Posterior vena cava (tissue), 2 donors: ENCODE measurements at regions of chr1 and their contacts with region 1.

Region 1: GRCh38 chr1:66478116-66478515 is 55.8 kb upstream of the SGIP1 start:
- DNase-seq: no peak

Region 2: GRCh38 chr1:65495137-65495536 is 983.0 kb before region 1 on chr1:
- intact Hi-C with region 1: loop called in 1 of 2 experiments (anchors 5 kb)
- DNase-seq: no peak

Region 3: DNA sequence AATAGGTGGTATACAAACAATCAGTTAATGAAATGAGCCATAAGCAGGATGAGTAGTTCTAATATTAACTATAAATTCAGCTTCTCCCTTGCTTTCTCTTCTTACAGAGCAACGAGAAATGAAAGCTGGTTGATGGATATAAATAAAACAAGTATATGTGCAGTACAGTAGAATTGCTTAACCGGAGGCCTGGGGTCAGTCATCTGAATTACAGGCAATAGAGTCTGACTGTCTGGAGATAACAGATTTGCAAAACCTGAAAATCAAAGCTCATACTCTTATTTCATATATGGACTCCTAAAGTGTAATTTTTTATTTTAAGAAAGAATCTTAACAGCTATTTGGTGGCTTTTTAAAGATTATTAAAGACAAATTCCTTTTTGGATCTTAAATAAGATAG is 12.7 kb after region 1 on chr1:
- intact Hi-C with region 1: no loop called
- DNase-seq: no peak

Region 4: GRCh38 chr1:66533804-66534740 is 56.0 kb after region 1 on chr1 and contains the start of gene SGIP1:
- intact Hi-C with region 1: no loop called
- DNase-seq: peak; percentile 90
- total RNA-seq, gene SGIP1: 25.6 to 40.2 TPM